Dendritic cell treated with granulocyte-macrophage colony-stimulating factor and Interleukin-4, amounts not matched to agents 40 ng/mL and 50 ng/mL, for 4 days (primary cell): ENCODE measurements at regions of chr4 and their contacts with region 1.

Region 1: DNA sequence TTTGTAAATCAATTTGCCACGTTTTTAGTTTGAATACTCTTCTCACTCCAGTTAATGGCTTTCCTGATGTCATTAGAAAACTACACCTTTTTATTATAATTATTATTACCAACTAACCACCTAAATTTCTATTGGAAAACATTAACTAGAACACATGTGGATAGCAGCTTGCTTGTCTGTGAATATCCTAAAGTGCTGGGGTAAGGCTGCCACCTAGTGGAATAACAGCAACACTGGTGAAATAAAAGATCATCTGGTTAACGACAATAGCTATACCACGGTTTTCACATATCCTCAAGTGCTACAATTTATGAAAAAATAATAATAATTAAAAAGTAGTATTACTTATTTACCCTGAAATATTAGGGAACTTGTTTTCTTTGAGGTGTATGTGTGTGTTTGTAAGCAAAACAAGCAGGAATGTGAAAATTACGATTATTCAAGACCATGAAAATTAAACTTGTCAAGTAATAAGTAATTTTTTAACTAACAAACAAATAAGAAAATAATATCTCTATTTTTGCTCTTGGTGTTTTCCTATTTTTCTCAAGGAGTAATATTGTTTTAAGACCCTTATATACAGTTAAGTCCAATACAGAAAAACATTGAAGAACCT is 130.1 kb upstream of the TECRL start:
- H3K4me3 Mint-ChIP-seq: no peak overlapping the region
- H3K27ac Mint-ChIP-seq: no peak overlapping the region
- H3K4me1 Mint-ChIP-seq: no peaks in the 10 kb centered on the region
- H3K27me3 Mint-ChIP-seq: no peaks in the 10 kb centered on the region

Region 2: DNA sequence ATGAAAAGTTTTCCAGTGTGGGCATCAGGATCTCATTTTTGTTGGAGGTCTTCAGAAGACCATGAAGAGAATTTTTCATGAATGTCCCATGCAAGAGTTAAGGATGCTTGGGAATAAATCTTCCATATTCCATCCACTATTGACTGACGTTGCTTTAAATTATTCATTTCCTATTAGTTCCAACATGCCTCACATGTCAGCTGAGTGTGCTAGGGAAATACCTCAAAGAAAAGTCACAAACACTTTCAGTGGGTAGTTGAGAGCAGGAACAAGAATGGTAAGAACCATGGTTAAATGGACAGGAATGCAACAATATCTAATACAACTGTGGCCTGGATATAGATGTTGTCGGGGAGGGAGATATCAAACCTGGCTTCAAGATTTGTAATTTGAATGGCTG is 740.2 kb before region 1 on chr4:
- intact Hi-C with region 1: no loop called
- H3K4me3 Mint-ChIP-seq: no peak overlapping the region
- H3K27ac Mint-ChIP-seq: no peak overlapping the region
- H3K4me1 Mint-ChIP-seq: no peaks in the 10 kb centered on the region
- H3K27me3 Mint-ChIP-seq: no peaks in the 10 kb centered on the region

Region 3: GRCh38 chr4:64158648-64159326 is 380.6 kb before region 1 on chr4:
- intact Hi-C with region 1: loop called (anchors 2 kb)
- H3K4me3 Mint-ChIP-seq: peak overlapping the region; percentile 23
- H3K27ac Mint-ChIP-seq: no peak overlapping the region
- H3K4me1 Mint-ChIP-seq: no peaks in the 10 kb centered on the region
- H3K27me3 Mint-ChIP-seq: no peaks in the 10 kb centered on the region

Region 4: GRCh38 chr4:64829749-64830148 is 290.4 kb after region 1 on chr4:
- intact Hi-C with region 1: no loop called
- H3K4me3 Mint-ChIP-seq: no peak overlapping the region
- H3K27ac Mint-ChIP-seq: no peak overlapping the region
- H3K4me1 Mint-ChIP-seq: no peaks in the 10 kb centered on the region
- H3K27me3 Mint-ChIP-seq: no peaks in the 10 kb centered on the region

Region 5: GRCh38 chr4:64935469-64936001 is 396.2 kb after region 1 on chr4:
- intact Hi-C with region 1: no loop called
- H3K4me3 Mint-ChIP-seq: no peak overlapping the region
- H3K27ac Mint-ChIP-seq: no peak overlapping the region
- H3K4me1 Mint-ChIP-seq: no peaks in the 10 kb centered on the region
- H3K27me3 Mint-ChIP-seq: no peaks in the 10 kb centered on the region